GM10248 (cell line): ENCODE measurements at regions of chr18 and their contacts with region 1.

Region 1: DNA sequence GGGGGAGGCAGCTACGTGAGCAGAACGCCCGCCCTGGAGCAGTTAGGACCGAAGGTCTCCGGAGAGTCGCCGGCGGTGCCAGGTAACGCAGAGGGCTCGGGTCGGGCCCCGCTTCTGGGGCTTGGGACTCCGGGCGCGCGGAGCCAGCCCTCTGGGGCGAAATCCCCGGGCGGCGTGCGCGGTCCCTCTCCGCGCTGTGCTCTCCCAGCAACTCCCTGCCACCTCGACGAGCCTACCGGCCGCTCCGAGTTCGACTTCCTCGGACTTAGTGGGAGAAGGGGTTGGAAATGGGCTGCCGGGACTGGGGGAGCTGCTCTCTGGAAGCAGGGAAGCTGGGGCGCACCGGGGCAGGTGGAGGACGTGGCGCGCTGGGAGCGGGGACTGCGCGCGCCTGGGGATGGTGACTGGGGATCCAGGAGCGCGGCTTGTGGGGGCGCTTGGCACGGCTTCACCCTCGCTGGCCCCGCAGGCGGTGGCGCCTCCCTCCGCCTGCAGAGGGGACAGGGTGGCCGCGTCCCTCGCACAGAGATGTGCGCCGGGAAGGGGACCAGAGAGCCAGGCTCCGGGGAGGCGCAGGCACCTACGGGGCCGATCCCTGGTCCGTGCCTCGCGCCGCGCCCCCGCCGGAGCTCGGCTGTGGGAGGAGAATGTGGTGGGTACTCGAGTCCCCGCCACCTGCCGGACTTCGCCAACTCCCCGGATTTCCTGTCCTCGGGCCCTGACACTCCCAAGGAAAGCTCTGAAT is 688 bp downstream of the CDH20 start:
- DNase-seq: no peak
- CTCF ChIP-seq: no peak

Region 2: DNA sequence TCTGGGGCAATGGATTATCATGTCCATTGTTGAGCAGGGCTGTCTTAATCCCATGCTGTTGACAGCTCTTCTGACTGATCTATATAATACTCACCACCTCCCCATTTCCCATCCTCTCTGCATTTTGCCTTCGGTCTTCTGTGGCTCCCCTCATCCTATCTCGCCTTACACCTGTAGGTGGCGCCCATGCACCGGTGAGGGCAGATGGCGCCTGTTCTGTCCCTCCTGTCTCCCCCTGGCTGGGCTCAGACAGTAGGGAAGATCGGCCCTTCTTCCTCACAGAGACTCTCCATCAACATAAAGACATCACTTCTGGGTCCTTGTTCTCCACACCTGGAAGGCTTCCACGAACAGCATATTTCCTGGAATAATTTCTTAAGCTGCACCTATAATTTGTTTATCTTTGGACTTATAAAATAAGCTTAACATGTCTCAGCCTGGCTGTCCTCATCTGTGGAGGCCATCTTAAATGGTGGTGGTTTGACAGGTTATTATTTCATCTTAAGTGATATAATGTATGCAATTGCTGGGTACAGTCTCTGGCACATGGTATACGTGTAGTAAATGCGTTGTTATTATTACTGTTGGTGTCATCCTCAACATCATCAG is 11.5 kb before region 1 on chr18:
- CTCF ChIA-PET with region 1: interaction called, 24 read pairs
- POLR2A ChIA-PET with region 1: no interaction called
- DNase-seq: peak; percentile 65
- CTCF ChIP-seq: peak; percentile 89